SK-N-SH (cell line): ENCODE measurements at regions of chr10 and their contacts with region 1.

Region 1: GRCh38 chr10:119750391-119751230 is 24.8 kb downstream of the INPP5F start:
- DNase-seq: peak; percentile 75
- H3K4me3 ChIP-seq: peak overlapping the region in 1 of 2 experiments; percentile 34; a peak in 1 of 4 replicates
- H3K27ac ChIP-seq: peak overlapping the region in 1 of 2 experiments; percentile 7; a peak in 1 of 4 replicates
- H3K4me1 ChIP-seq: peaks cover 0 to 7% of the 10 kb centered on the region in 2 experiments; a peak in 2 of 4 replicates
- H3K27me3 ChIP-seq: no peaks in the 10 kb centered on the region
- CTCF ChIP-seq: peak; percentile 93
- EP300 ChIP-seq: no peak
- RAD21 ChIP-seq: peak; percentile 98

Region 2: GRCh38 chr10:119608316-119609155 is 142.1 kb before region 1 on chr10:
- CTCF ChIA-PET with region 1: interaction called, 27 read pairs
- POLR2A ChIA-PET with region 1: no interaction called
- DNase-seq: peak; percentile 67
- H3K4me3 ChIP-seq: no peak overlapping the region; a peak in 1 of 4 replicates
- H3K27ac ChIP-seq: no peak overlapping the region
- H3K4me1 ChIP-seq: peaks cover 0 to 4% of the 10 kb centered on the region in 2 experiments; a peak in 1 of 4 replicates
- H3K27me3 ChIP-seq: no peaks in the 10 kb centered on the region
- CTCF ChIP-seq: peak; percentile 74
- EP300 ChIP-seq: no peak
- RAD21 ChIP-seq: peak; percentile 88

Region 3: DNA sequence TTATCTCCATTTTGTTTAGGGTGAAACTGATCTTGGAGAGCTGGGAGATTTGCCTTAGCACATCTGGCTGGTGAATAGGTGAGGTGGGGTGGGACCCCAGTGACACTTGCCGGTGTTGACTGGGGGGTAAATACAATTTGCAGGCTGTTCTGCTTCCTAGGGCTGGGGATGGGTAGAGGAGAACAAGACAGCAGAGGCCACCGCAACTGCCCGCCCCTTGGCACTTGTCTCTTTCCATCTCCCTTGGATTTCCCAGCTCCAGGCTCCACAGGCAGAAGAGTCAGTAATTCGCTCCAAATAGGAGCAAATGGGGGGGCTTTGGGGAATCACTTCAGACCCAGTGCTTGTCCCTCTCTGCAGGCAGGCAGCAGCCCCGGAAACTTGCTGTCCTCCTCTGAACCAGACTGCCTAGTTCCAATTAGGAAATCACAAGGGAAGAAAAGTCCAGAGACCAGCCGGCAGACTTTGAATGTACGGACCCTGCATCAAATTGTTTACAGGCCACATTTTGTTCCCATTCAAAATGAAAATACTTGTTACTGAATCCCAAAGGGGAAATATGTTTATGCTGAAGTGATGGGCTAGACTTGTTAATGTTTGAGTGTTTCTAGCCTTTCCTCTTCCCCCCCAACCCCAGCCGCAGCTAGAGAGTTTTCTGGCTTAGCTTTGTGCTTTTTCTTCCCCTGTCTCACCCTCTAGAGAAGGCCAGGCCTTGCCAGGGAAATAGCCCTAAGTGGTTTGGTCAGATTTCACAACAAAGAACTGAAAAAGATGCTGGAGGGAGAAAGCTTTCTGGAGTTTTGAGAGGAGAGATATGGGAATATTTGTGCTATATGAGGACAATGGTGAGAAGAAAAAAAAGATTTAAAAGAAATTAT is 34.7 kb before region 1 on chr10:
- CTCF ChIA-PET with region 1: interaction called, 11 read pairs
- POLR2A ChIA-PET with region 1: no interaction called
- DNase-seq: peak; percentile 26
- H3K4me3 ChIP-seq: no peak overlapping the region
- H3K27ac ChIP-seq: no peak overlapping the region
- H3K4me1 ChIP-seq: no peaks in the 10 kb centered on the region; a peak in 1 of 4 replicates
- H3K27me3 ChIP-seq: no peaks in the 10 kb centered on the region
- CTCF ChIP-seq: no peak
- EP300 ChIP-seq: no peak
- RAD21 ChIP-seq: no peak

Region 4: DNA sequence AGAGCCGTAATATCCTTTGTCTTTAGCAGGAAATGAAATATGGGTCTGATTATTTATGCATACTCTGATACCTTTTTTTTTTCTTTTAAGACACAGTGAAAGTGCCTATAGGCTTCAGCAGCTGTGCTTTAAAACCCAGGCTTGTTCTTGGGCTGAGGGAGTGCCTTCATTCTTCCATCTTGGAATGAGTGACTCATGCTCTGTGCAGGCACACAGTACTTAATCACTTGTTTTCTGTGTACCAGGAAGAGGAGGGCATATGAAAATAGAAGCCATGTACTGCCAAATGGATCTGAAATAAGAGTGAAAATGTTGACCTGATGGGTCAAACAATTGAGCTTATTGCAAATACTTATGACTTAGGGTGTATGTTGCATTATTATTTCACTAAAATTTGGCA is 12.8 kb before region 1 on chr10:
- CTCF ChIA-PET with region 1: interaction called, 60 read pairs
- POLR2A ChIA-PET with region 1: no interaction called
- DNase-seq: no peak
- H3K4me3 ChIP-seq: 0 out of 4 replicates have a peak overlapping the region, but pooled peaks of 1 of the 2 experiments have one; percentile 11
- H3K27ac ChIP-seq: peak overlapping the region; percentile 73 to 77; a peak in 3 of 4 replicates
- H3K4me1 ChIP-seq: peaks cover 3 to 46% of the 10 kb centered on the region in 2 experiments; a peak in 3 of 4 replicates
- H3K27me3 ChIP-seq: no peaks in the 10 kb centered on the region
- CTCF ChIP-seq: no peak
- EP300 ChIP-seq: no peak
- RAD21 ChIP-seq: no peak

Region 5: GRCh38 chr10:119769886-119770285 is 19.3 kb after region 1 on chr10:
- CTCF ChIA-PET with region 1: interaction called, 23 read pairs
- POLR2A ChIA-PET with region 1: no interaction called
- DNase-seq: no peak
- H3K4me3 ChIP-seq: peak overlapping the region in 1 of 2 experiments; percentile 34; a peak in 1 of 4 replicates
- H3K27ac ChIP-seq: peak overlapping the region; percentile 67 to 97; a peak in 3 of 4 replicates
- H3K4me1 ChIP-seq: peaks cover 11 to 30% of the 10 kb centered on the region in 2 experiments
- H3K27me3 ChIP-seq: no peaks in the 10 kb centered on the region
- CTCF ChIP-seq: no peak
- EP300 ChIP-seq: peak in 1 of 2 experiments; percentile 52; a peak in 2 of 4 replicates
- RAD21 ChIP-seq: no peak

Region 6: GRCh38 chr10:119831656-119832055 is 81.0 kb after region 1 on chr10:
- CTCF ChIA-PET with region 1: interaction called, 11 read pairs
- POLR2A ChIA-PET with region 1: no interaction called
- DNase-seq: no peak
- H3K4me3 ChIP-seq: no peak overlapping the region
- H3K27ac ChIP-seq: no peak overlapping the region
- H3K4me1 ChIP-seq: no peaks in the 10 kb centered on the region
- H3K27me3 ChIP-seq: no peaks in the 10 kb centered on the region
- CTCF ChIP-seq: no peak
- EP300 ChIP-seq: no peak
- RAD21 ChIP-seq: no peak

Region 7: GRCh38 chr10:119872860-119873681 is 122.5 kb after region 1 on chr10:
- CTCF ChIA-PET with region 1: interaction called, 26 read pairs
- POLR2A ChIA-PET with region 1: interaction called, 3 read pairs
- DNase-seq: peak; percentile 95
- H3K4me3 ChIP-seq: peak overlapping the region; percentile 79 to 88
- H3K27ac ChIP-seq: peak overlapping the region; percentile 43 to 94
- H3K4me1 ChIP-seq: peaks cover 5 to 11% of the 10 kb centered on the region in 2 experiments; a peak in 3 of 4 replicates
- H3K27me3 ChIP-seq: no peaks in the 10 kb centered on the region
- CTCF ChIP-seq: no peak
- EP300 ChIP-seq: no peak
- RAD21 ChIP-seq: no peak

Region 8: GRCh38 chr10:120369856-120370276 is 619.3 kb after region 1 on chr10:
- CTCF ChIA-PET with region 1: no interaction called
- POLR2A ChIA-PET with region 1: no interaction called
- DNase-seq: no peak
- H3K4me3 ChIP-seq: no peak overlapping the region
- H3K27ac ChIP-seq: peak overlapping the region in 1 of 2 experiments; percentile 91; a peak in 2 of 4 replicates
- H3K4me1 ChIP-seq: peaks cover 0 to 6% of the 10 kb centered on the region in 2 experiments; a peak in 1 of 4 replicates
- H3K27me3 ChIP-seq: no peaks in the 10 kb centered on the region
- CTCF ChIP-seq: no peak
- EP300 ChIP-seq: peak in 1 of 2 experiments; percentile 38; a peak in 1 of 4 replicates
- RAD21 ChIP-seq: no peak